Activated naive CD4-positive, alpha-beta T cell treated with anti-CD3 and anti-CD28 coated beads, Interleukin-2, amount 10 ng/mL, durations not matched to agents 7 days and 5 days (primary cell): ENCODE measurements at regions of chr12 and their contacts with region 1.

Region 1: GRCh38 chr12:110468212-110469048 is at the starts of genes FAM216A and GPN3:
- DNase-seq: peak; percentile 97
- H3K4me3 Mint-ChIP-seq: peak within 1 kb of the TSS; percentile 98
- H3K27ac Mint-ChIP-seq: peak within 1 kb of the TSS; percentile 99
- H3K4me1 Mint-ChIP-seq: peaks cover 45% of the 10 kb centered on the region
- H3K27me3 Mint-ChIP-seq: no peaks in the 10 kb centered on the region

Region 2: DNA sequence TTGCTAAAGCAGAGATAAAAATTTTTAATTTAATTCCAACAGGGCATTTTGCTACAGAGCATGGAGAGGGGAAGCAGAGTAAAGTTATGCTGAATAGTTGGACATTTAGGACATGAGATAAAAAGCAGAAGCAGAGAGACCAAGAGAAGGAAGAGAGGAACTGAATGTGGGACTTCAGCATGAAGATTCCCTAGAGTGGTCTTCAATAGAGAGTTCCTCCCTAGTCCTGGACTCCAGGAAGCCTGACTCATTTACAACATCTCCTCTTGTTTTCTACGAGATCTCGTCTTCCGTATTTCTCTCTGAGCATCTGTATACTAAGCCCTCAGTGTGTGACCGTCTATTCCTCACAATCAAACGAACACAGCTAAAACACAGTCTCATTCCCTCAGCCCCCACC is 379.5 kb before region 1 on chr12:
- CTCF ChIA-PET with region 1: no interaction called
- DNase-seq: no peak
- H3K4me3 Mint-ChIP-seq: no peak overlapping the region
- H3K27ac Mint-ChIP-seq: no peak overlapping the region
- H3K4me1 Mint-ChIP-seq: peaks cover 9% of the 10 kb centered on the region
- H3K27me3 Mint-ChIP-seq: peaks cover 86% of the 10 kb centered on the region

Region 3: GRCh38 chr12:110449799-110450497 is 18.5 kb before region 1 on chr12 and contains the start of gene ARPC3:
- CTCF ChIA-PET with region 1: interaction called, 30 read pairs
- DNase-seq: peak; percentile 98
- H3K4me3 Mint-ChIP-seq: peak within 1 kb of the TSS; percentile 99
- H3K27ac Mint-ChIP-seq: peak within 1 kb of the TSS; percentile 99
- H3K4me1 Mint-ChIP-seq: peaks cover 51% of the 10 kb centered on the region
- H3K27me3 Mint-ChIP-seq: no peaks in the 10 kb centered on the region

Region 4: GRCh38 chr12:110501752-110502738 is 33.6 kb after region 1 on chr12 and contains the starts of genes RAD9B and VPS29:
- CTCF ChIA-PET with region 1: interaction called, 22 read pairs
- DNase-seq: peak; percentile 100
- H3K4me3 Mint-ChIP-seq: peak within 1 kb of the TSS; percentile 96
- H3K27ac Mint-ChIP-seq: peak within 1 kb of the TSS; percentile 97
- H3K4me1 Mint-ChIP-seq: peaks cover 42% of the 10 kb centered on the region
- H3K27me3 Mint-ChIP-seq: peaks cover 5% of the 10 kb centered on the region

Region 5: GRCh38 chr12:110555577-110556406 is 87.4 kb after region 1 on chr12:
- CTCF ChIA-PET with region 1: interaction called, 11 read pairs
- DNase-seq: no peak
- H3K4me3 Mint-ChIP-seq: no peak overlapping the region
- H3K27ac Mint-ChIP-seq: no peak overlapping the region
- H3K4me1 Mint-ChIP-seq: peaks cover 29% of the 10 kb centered on the region
- H3K27me3 Mint-ChIP-seq: no peaks in the 10 kb centered on the region